Heart right ventricle (tissue), 16 donors: ENCODE measurements at regions of chr16 and their contacts with region 1.

Region 1: DNA sequence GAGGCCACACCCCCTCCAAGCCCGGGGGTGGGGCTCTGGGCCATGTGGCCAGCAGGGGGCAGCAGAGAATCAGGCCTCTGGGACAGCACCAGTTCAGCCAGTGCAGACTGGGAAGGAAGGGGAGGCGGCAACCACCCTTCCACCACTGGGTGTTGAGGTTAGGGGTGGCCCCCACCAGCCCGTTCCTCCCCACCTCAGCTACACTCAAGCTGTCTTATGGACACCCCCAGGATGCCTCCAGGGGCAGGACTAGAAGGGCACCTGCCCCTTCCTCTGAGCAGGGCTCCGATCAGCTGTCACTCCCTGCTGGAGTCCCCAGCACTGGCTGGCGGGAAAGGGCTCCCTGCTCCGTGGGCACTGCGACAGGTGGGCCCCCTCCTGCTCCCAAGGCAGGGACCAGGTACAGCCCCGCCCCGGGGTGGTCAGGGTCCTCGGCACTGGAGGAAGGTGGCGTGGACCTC is 21.8 kb downstream of the KATNB1 start:
- DNase-seq: peak; percentile 90 to 93
- ATAC-seq: peak; percentile 81 to 93 (median 90)
- H3K4me3 ChIP-seq: no peak overlapping the region
- H3K27ac ChIP-seq: peak overlapping the region in 8 of 10 donors; percentile 54 to 80 (median 67)
- H3K4me1 ChIP-seq: peaks cover 0 to 35% (median 17%) of the 10 kb centered on the region in 9 donors
- H3K27me3 ChIP-seq: no peaks in the 10 kb centered on the region
- CTCF ChIP-seq: peak; percentile 96 to 100 (median 99)

Region 2: GRCh38 chr16:57802341-57803133 is 45.2 kb after region 1 on chr16 and contains the start of gene KIFC3:
- intact Hi-C with region 1: loop called in 2 of 10 experiments (anchors 5 kb)
- DNase-seq: peak; percentile 90 to 91
- ATAC-seq: peak; percentile 9 to 76 (median 34)
- H3K4me3 ChIP-seq: peak within 1 kb of the TSS; percentile 51 to 85 (median 66)
- H3K27ac ChIP-seq: peak within 1 kb of the TSS; percentile 89 to 99 (median 96)
- H3K4me1 ChIP-seq: peaks cover 34 to 81% (median 68%) of the 10 kb centered on the region in 9 donors
- H3K27me3 ChIP-seq: peaks cover 0 to 12% (median 0%) of the 10 kb centered on the region in 7 donors
- CTCF ChIP-seq: peak in 5 of 9 donors; percentile 34 to 60 (median 44)
- total RNA-seq, gene KIFC3: 42.5 to 91.4 (median 63.5) TPM

Region 3: DNA sequence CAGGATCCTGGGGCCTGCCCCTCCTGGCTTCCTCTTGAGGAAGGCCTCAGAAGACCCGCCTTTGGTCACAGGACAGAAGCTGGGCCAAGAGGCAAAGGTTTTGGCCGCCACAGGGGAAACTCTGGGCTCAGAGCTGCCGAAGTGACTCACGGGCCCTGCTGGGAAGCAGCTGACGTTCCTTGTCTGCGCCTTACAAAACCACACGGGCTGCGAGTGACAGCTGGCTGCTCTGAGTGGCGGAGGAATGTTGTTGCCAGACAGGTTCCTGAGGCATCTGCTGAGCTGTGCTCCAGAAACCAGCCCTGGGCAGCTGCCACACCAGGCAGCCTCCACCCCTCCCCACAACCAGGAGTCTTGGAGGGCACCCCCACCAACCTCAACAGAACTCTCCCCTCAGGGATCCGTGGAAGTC is 59.0 kb after region 1 on chr16:
- intact Hi-C with region 1: no loop called
- DNase-seq: peak; percentile 83 to 90
- ATAC-seq: peak; percentile 94 to 97 (median 97)
- H3K4me3 ChIP-seq: no peak overlapping the region
- H3K27ac ChIP-seq: peak overlapping the region; percentile 47 to 91 (median 84)
- H3K4me1 ChIP-seq: peaks cover 7 to 24% (median 20%) of the 10 kb centered on the region in 9 donors
- H3K27me3 ChIP-seq: no peaks in the 10 kb centered on the region
- CTCF ChIP-seq: peak in 2 of 9 donors; percentile 7 to 10

Region 4: DNA sequence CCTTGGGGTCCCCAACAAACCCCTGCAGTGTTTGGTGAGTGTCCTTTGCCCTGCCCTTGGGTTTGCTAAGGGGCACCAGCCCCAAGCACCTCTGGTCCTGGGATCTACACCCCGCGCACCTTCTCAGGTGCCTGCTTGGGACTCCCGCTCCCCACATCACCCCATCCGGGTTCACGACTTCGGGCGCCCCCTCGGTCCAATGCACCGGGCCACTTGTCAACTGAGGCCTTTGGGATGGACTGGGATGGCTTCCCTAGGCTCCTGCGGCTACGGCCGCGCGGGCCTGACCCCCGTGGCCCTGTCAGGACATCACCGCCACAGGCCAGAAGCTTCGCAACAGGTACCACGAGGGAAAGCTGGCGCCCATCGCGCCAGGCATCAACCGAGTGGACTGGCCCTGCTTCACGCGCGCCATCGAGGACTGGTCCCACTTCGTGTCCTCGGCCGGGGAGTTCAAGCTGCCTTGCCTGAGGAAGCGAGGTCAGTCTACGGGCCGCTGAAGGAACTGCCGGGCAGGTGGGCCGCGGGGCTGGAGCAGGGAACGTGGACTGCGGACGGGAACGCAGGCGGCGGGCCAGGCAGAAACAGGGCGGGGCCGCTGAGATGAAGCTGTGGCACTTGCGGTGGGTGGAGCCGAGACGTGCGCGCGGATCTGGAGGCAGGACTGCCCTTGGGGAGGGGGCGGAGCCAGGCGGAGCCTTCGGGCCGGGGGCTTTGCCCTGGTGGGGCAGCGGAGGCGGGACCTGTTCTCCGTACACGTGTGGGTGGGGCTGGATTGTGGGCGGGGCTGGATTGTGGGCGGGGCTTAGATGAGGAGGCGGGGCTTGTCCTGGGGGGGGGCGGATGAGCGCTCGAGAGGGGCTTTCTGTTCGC is 227.2 kb after region 1 on chr16:
- intact Hi-C with region 1: loop called in 1 of 10 experiments (anchors 5 kb)
- DNase-seq: peak; percentile 67 to 87
- ATAC-seq: peak; percentile 84 to 92 (median 90)
- H3K4me3 ChIP-seq: peak overlapping the region; percentile 19 to 65 (median 55)
- H3K27ac ChIP-seq: no peak overlapping the region
- H3K4me1 ChIP-seq: peaks cover 6 to 24% (median 15%) of the 10 kb centered on the region in 9 donors
- H3K27me3 ChIP-seq: peaks cover 0 to 13% (median 0%) of the 10 kb centered on the region in 7 donors
- CTCF ChIP-seq: no peak

Region 5: DNA sequence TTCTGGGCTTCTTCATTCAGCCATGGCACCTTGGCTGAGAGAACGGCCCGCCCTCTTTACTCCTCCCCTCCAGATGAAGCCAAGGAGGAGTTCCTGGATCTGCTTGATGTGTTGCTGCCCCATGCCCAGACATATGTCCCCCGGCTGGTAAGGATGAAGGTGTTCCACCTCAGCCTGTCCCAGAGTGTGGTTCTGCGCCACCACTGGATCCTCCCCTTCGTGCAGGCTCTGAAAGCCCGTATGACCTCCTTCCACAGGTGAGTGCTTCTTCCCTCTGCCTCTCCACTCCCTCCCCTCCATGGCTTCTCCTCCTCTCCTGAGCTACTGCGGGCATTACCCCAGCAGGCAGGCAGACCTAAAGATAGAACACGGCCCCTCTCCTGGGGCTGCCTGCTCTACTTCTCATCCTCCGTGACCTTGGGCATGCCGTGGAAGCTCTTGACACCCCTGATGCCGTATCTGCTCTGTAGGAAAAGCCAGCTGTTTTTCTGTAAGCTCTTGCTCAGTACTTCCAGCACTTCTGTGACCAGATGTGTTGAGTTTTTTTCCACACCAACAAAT is 252.6 kb after region 1 on chr16:
- intact Hi-C with region 1: loop called in 1 of 10 experiments (anchors 5 kb)
- DNase-seq: peak in 1 of 2 donors; percentile 21
- ATAC-seq: peak in 6 of 8 donors; percentile 19 to 76 (median 62)
- H3K4me3 ChIP-seq: no peak overlapping the region
- H3K27ac ChIP-seq: no peak overlapping the region
- H3K4me1 ChIP-seq: peaks cover 0 to 12% (median 3%) of the 10 kb centered on the region in 9 donors
- H3K27me3 ChIP-seq: no peaks in the 10 kb centered on the region
- CTCF ChIP-seq: no peak

Region 6: GRCh38 chr16:59021751-59022150 is 1264.4 kb after region 1 on chr16:
- intact Hi-C with region 1: no loop called
- DNase-seq: no peak
- ATAC-seq: no peak
- H3K4me3 ChIP-seq: no peak overlapping the region
- H3K27ac ChIP-seq: no peak overlapping the region
- H3K4me1 ChIP-seq: no peaks in the 10 kb centered on the region
- H3K27me3 ChIP-seq: no peaks in the 10 kb centered on the region
- CTCF ChIP-seq: no peak